Panc1 (cell line): ENCODE measurements at regions of chr6 and their contacts with region 1.

Region 1: GRCh38 chr6:32971581-32972352 is 3.4 kb downstream of the BRD2 start:
- DNase-seq: peak; percentile 98
- ATAC-seq: peak; percentile 72
- H3K4me3 ChIP-seq: peak overlapping the region; percentile 94 to 100
- H3K27ac ChIP-seq: peak overlapping the region; percentile 100
- H3K4me1 ChIP-seq: peaks cover 24% of the 10 kb centered on the region
- H3K27me3 ChIP-seq: no peaks in the 10 kb centered on the region
- CTCF ChIP-seq: no peak

Region 2: GRCh38 chr6:32894080-32895005 is 77.4 kb before region 1 on chr6:
- CTCF ChIA-PET with region 1: no interaction called
- POLR2A ChIA-PET with region 1: interaction called, 10 read pairs
- in situ Hi-C with region 1: no loop called
- intact Hi-C with region 1: no loop called
- DNase-seq: peak; percentile 88
- ATAC-seq: peak; percentile 100
- H3K4me3 ChIP-seq: peak overlapping the region; percentile 90 to 96
- H3K27ac ChIP-seq: peak overlapping the region; percentile 91
- H3K4me1 ChIP-seq: peaks cover 9% of the 10 kb centered on the region
- H3K27me3 ChIP-seq: no peaks in the 10 kb centered on the region
- CTCF ChIP-seq: no peak

Region 3: GRCh38 chr6:32933636-32934085 is 38.1 kb before region 1 on chr6:
- CTCF ChIA-PET with region 1: interaction called, 5 read pairs
- POLR2A ChIA-PET with region 1: interaction called, 11 read pairs
- in situ Hi-C with region 1: no loop called
- intact Hi-C with region 1: no loop called
- DNase-seq: peak; percentile 48
- ATAC-seq: peak; percentile 83
- H3K4me3 ChIP-seq: no peak overlapping the region
- H3K27ac ChIP-seq: no peak overlapping the region
- H3K4me1 ChIP-seq: no peaks in the 10 kb centered on the region
- H3K27me3 ChIP-seq: peaks cover 2% of the 10 kb centered on the region; the same call in 1 of the 2 replicates
- CTCF ChIP-seq: peak; percentile 89

Region 4: DNA sequence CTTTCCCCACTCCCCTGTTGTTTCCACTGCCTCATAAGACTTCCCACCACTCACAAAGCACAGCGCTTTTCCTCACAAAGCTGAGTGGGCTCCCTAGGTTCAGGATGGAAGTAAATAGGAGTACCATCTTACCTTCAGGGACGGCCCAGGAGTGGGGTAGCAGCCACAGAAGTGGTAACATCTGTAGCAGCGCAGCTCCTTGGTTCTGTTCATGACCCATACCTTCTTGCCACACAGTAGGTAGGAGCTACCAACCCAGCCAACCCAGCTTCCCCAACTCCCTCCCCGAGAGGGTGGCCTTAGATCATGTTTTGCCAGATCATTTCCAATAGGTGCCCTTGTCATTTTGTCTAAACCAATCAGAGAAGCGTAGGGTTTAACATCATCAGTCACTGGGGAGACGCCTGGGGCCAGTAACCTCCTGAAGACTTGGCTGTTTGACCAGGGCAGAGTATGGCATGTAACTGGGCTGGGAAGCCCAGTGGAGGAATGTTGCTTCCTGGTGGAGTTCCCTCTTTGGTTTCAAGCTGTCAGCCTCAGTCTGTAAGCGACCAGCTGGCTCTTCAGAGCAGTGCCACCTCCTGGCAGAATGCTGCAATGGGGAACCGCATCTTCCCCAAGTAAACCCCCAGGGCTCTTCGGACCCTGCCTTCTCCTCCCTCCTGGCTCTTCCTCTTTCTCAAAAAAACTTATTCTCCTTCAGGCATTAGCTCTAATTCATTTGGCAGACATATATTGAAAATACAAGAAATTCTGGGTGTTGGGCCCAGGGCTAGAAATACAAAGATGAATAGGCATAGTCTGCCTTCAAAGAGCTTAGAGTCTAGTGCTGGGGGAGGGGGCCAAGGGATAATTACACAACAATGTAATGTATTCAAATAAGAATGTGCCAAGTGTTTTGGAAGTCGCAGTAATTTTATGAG is 18.7 kb before region 1 on chr6 and contains the start of gene HLA-DMA:
- CTCF ChIA-PET with region 1: interaction called, 3 read pairs
- POLR2A ChIA-PET with region 1: interaction called, 10 read pairs
- in situ Hi-C with region 1: no loop called
- intact Hi-C with region 1: no loop called
- DNase-seq: no peak
- ATAC-seq: peak; percentile 87
- H3K4me3 ChIP-seq: no peak within 1 kb of the TSS
- H3K27ac ChIP-seq: no peak within 1 kb of the TSS
- H3K4me1 ChIP-seq: no peaks in the 10 kb centered on the region
- H3K27me3 ChIP-seq: no peaks in the 10 kb centered on the region
- CTCF ChIP-seq: peak; percentile 75
- total RNA-seq, gene HLA-DMA: 2.8 TPM

Region 5: GRCh38 chr6:32984605-32985389 is 13.0 kb after region 1 on chr6:
- CTCF ChIA-PET with region 1: interaction called, 12 read pairs
- POLR2A ChIA-PET with region 1: interaction called, 26 read pairs
- in situ Hi-C with region 1: no loop called
- intact Hi-C with region 1: no loop called
- DNase-seq: peak; percentile 76
- ATAC-seq: peak; percentile 85
- H3K4me3 ChIP-seq: no peak overlapping the region
- H3K27ac ChIP-seq: no peak overlapping the region
- H3K4me1 ChIP-seq: peaks cover 28% of the 10 kb centered on the region
- H3K27me3 ChIP-seq: no peaks in the 10 kb centered on the region
- CTCF ChIP-seq: peak; percentile 94

Region 6: GRCh38 chr6:33320315-33321181 is 348.8 kb after region 1 on chr6:
- CTCF ChIA-PET with region 1: interaction called, 16 read pairs
- POLR2A ChIA-PET with region 1: interaction called, 5 read pairs
- in situ Hi-C with region 1: no loop called
- intact Hi-C with region 1: no loop called
- DNase-seq: no peak
- ATAC-seq: no peak
- H3K4me3 ChIP-seq: peak overlapping the region; percentile 65 to 81
- H3K27ac ChIP-seq: peak overlapping the region; percentile 89
- H3K4me1 ChIP-seq: peaks cover 54% of the 10 kb centered on the region
- H3K27me3 ChIP-seq: no peaks in the 10 kb centered on the region
- CTCF ChIP-seq: no peak

Region 7: GRCh38 chr6:33391278-33391921 is 419.6 kb after region 1 on chr6 and contains the start of gene KIFC1:
- CTCF ChIA-PET with region 1: no interaction called
- POLR2A ChIA-PET with region 1: interaction called, 10 read pairs
- in situ Hi-C with region 1: no loop called
- intact Hi-C with region 1: no loop called
- DNase-seq: peak; percentile 98
- ATAC-seq: peak; percentile 97
- H3K4me3 ChIP-seq: peak within 1 kb of the TSS; percentile 88 to 89
- H3K27ac ChIP-seq: peak within 1 kb of the TSS; percentile 98
- H3K4me1 ChIP-seq: peaks cover 27% of the 10 kb centered on the region
- H3K27me3 ChIP-seq: no peaks in the 10 kb centered on the region
- CTCF ChIP-seq: peak; percentile 99
- total RNA-seq, gene KIFC1: 81.8 TPM